Calu3 (cell line): ENCODE measurements at regions of chr20 and their contacts with region 1.

Region 1: GRCh38 chr20:25399037-25399430 is 8.4 kb upstream of the ABHD12 start:
- DNase-seq: no peak
- H3K4me3 Mint-ChIP-seq: no peak overlapping the region
- H3K27ac Mint-ChIP-seq: no peak overlapping the region
- H3K4me1 Mint-ChIP-seq: peaks cover 1% of the 10 kb centered on the region
- H3K27me3 Mint-ChIP-seq: no peaks in the 10 kb centered on the region
- CTCF ChIP-seq: no peak

Region 2: DNA sequence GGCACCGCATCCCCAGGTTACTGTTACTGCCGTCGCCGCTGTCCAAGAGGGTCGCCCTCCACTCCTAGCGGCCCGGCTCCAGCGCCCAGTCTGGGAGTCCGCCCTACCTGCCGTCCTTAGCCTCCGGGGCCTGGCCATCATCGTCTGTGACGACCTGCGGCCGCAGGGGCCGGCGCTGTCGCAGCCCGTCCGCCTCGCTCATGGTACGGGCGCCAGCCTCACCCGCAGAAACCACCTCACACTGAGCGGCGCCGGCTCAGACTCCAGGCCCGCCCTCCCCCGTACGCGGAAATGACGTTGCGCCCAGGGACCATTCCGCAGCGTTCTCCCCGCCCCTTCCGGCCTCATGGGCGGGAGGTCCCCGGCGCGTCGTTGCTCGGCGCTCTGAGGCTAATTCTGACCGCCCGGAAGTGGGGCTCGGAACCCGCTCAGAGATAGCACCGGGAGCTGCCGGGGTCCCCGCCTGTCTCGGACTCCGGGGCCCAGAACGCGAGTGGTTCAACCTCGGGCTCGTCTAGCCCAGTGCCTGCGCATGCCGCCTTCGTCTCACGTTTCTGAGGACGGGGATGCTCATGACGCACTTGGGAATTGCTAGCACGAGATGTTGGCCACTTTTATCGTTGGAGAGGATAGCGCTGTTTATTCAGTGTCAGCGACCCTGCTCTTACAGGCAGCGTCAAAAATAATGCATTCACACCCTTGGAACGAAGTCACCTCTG is 406.4 kb before region 1 on chr20 and contains the start of gene APMAP:
- CTCF ChIA-PET with region 1: no interaction called
- intact Hi-C with region 1: loop called (anchors 5 kb)
- DNase-seq: peak; percentile 82
- H3K4me3 Mint-ChIP-seq: peak within 1 kb of the TSS; percentile 81
- H3K27ac Mint-ChIP-seq: peak within 1 kb of the TSS; percentile 68
- H3K4me1 Mint-ChIP-seq: peaks cover 16% of the 10 kb centered on the region
- H3K27me3 Mint-ChIP-seq: no peaks in the 10 kb centered on the region
- CTCF ChIP-seq: no peak
- total RNA-seq, gene APMAP: 29.9 and 30.7 TPM in 2 replicates

Region 3: DNA sequence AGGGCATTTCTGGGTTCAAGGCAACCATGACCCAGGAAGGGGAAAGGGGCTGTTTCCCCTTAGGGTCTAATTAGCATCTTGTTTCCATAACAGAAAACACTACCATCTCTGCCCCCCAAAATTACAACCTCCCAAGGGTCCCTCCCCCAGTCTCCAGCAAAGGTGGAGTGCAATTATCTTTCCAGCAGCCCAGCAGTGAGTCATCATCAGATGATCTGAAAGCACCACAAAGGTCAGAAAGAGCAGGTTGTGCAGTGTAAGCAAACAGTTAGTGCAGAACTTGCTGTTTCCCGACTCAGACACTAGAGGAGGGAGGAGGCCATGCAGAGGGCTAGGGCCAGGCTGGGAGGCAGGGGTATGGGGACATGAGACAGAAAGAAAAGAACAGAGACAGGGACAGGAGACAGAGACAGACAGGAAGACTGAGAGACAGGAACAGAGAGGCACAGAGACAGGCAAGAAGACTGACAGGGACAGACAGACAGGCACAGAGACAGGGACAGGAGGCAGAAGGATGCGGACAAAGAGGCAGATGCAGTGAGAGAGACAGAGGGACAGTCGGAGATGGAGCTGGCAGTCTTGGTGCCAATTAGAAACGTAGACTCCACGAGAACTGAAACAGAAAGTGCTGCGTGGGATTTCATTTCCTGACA is 88.6 kb before region 1 on chr20:
- CTCF ChIA-PET with region 1: no interaction called
- intact Hi-C with region 1: loop called (anchors 2 kb)
- DNase-seq: peak; percentile 35
- H3K4me3 Mint-ChIP-seq: peak overlapping the region; percentile 39
- H3K27ac Mint-ChIP-seq: peak overlapping the region; percentile 60
- H3K4me1 Mint-ChIP-seq: peaks cover 11% of the 10 kb centered on the region
- H3K27me3 Mint-ChIP-seq: no peaks in the 10 kb centered on the region
- CTCF ChIP-seq: no peak